ENCODE measurements at regions of chr12 and their contacts with region 1.

Region 1: DNA sequence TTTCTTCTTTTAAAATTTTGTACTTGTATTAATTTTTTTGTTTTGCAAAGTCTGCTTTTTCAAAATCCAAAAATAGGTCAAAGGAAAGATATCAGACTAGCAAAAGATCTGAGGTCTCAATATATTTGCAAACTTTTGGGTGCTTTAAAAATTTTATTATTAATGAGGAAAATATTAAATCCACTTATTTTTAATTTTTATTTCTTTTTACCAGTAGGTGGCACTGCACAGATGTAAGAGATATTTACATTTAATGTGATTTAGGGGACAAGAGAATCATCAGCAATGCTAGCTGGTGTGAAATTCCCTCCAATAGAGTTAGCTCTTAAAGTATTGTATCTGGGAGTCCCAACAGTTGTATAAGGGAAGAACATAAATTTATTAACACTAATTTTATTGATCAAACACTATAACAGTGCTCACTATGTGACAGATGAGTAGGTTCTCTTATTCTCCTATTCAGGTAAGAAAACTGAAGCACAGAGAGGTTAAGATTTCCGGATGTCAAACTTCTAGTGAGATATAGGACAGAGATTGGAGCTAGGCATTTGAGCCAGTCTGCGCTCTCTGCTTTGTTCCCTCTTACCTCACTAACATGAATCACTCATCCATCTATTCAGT is 30.5 kb downstream of the ALX1 start:
- DNase-seq: peak; percentile 43
- H3K4me3 ChIP-seq: no peak overlapping the region
- H3K27ac ChIP-seq: no peak overlapping the region
- H3K4me1 ChIP-seq: no peaks in the 10 kb centered on the region
- H3K27me3 ChIP-seq: no peaks in the 10 kb centered on the region
- CTCF ChIP-seq: peak in 1 of 2 donors; percentile 11
- POLR2A ChIP-seq: no peak

Region 2: GRCh38 chr12:85076688-85077430 is 233.7 kb before region 1 on chr12:
- CTCF ChIA-PET with region 1: interaction called, 9 read pairs
- POLR2A ChIA-PET with region 1: no interaction called
- dilution Hi-C with region 1: no loop called
- intact Hi-C with region 1: loop called (anchors 5 kb)
- DNase-seq: peak; percentile 87
- H3K4me3 ChIP-seq: no peak overlapping the region
- H3K27ac ChIP-seq: no peak overlapping the region
- H3K4me1 ChIP-seq: no peaks in the 10 kb centered on the region
- H3K27me3 ChIP-seq: no peaks in the 10 kb centered on the region
- CTCF ChIP-seq: peak; percentile 27 to 33
- POLR2A ChIP-seq: no peak

Region 3: GRCh38 chr12:85363382-85364190 is 53.0 kb after region 1 on chr12:
- CTCF ChIA-PET with region 1: interaction called, 10 read pairs
- POLR2A ChIA-PET with region 1: no interaction called
- dilution Hi-C with region 1: no loop called
- intact Hi-C with region 1: no loop called
- DNase-seq: peak; percentile 91
- H3K4me3 ChIP-seq: no peak overlapping the region
- H3K27ac ChIP-seq: peak overlapping the region; percentile 19
- H3K4me1 ChIP-seq: peaks cover 18% of the 10 kb centered on the region
- H3K27me3 ChIP-seq: no peaks in the 10 kb centered on the region
- CTCF ChIP-seq: no peak
- POLR2A ChIP-seq: no peak

Region 4: GRCh38 chr12:85424581-85425348 is 114.2 kb after region 1 on chr12:
- CTCF ChIA-PET with region 1: interaction called, 33 read pairs
- POLR2A ChIA-PET with region 1: no interaction called
- dilution Hi-C with region 1: no loop called
- intact Hi-C with region 1: no loop called
- DNase-seq: peak; percentile 31
- H3K4me3 ChIP-seq: no peak overlapping the region
- H3K27ac ChIP-seq: no peak overlapping the region
- H3K4me1 ChIP-seq: no peaks in the 10 kb centered on the region
- H3K27me3 ChIP-seq: no peaks in the 10 kb centered on the region
- CTCF ChIP-seq: peak; percentile 24
- POLR2A ChIP-seq: no peak

Region 5: GRCh38 chr12:85448548-85449139 is 138.1 kb after region 1 on chr12:
- CTCF ChIA-PET with region 1: interaction called, 55 read pairs
- POLR2A ChIA-PET with region 1: no interaction called
- dilution Hi-C with region 1: no loop called
- intact Hi-C with region 1: loop called (anchors 2 kb)
- DNase-seq: peak; percentile 42
- H3K4me3 ChIP-seq: no peak overlapping the region
- H3K27ac ChIP-seq: no peak overlapping the region
- H3K4me1 ChIP-seq: no peaks in the 10 kb centered on the region
- H3K27me3 ChIP-seq: no peaks in the 10 kb centered on the region
- CTCF ChIP-seq: no peak
- POLR2A ChIP-seq: no peak

Region 6: GRCh38 chr12:85755760-85756159 is 445.2 kb after region 1 on chr12:
- CTCF ChIA-PET with region 1: no interaction called
- POLR2A ChIA-PET with region 1: no interaction called
- dilution Hi-C with region 1: no loop called
- intact Hi-C with region 1: no loop called
- DNase-seq: no peak
- H3K4me3 ChIP-seq: no peak overlapping the region
- H3K27ac ChIP-seq: no peak overlapping the region
- H3K4me1 ChIP-seq: no peaks in the 10 kb centered on the region
- H3K27me3 ChIP-seq: no peaks in the 10 kb centered on the region
- CTCF ChIP-seq: no peak
- POLR2A ChIP-seq: no peak

Measured in endothelial cell of umbilical vein (primary cell).